Astrocyte of the cerebellum (primary cell): ENCODE measurements at regions of chr1 and their contacts with region 1.

Region 1: DNA sequence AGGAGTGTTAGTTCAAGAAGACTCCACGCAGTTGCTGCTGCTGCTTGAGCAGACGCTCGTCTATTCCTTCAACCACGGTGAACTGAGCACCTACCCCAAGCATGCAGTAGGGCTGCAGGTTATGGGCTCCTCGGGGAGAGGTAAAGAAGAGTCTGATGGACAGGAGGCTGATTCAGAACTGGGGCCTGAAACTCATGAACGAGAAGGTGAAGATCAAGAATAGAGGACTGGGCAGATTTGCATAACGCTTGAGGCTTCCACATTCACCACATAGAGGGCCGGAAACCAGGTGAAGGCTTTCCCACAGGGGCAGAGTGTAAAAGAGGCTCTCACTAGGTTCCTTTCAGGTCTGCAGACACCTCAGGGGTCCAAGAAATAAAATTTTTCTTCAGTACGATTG is 9.1 kb downstream of the ABCA4 start:
- DNase-seq: no peak
- H3K4me3 ChIP-seq: no peak overlapping the region
- CTCF ChIP-seq: no peak

Region 2: GRCh38 chr1:94329986-94330385 is 218.1 kb after region 1 on chr1:
- in situ Hi-C with region 1: loop called (anchors 10 kb)
- DNase-seq: peak; percentile 53
- H3K4me3 ChIP-seq: no peak overlapping the region
- CTCF ChIP-seq: peak; percentile 77